Activated CD4-positive, alpha-beta T cell treated with anti-CD3 and anti-CD28 coated beads, Interleukin-2, amount 10 ng/mL, durations not matched to agents 24 days and 14 days (primary cell): ENCODE measurements at regions of chr6 and their contacts with region 1.

Region 1: DNA sequence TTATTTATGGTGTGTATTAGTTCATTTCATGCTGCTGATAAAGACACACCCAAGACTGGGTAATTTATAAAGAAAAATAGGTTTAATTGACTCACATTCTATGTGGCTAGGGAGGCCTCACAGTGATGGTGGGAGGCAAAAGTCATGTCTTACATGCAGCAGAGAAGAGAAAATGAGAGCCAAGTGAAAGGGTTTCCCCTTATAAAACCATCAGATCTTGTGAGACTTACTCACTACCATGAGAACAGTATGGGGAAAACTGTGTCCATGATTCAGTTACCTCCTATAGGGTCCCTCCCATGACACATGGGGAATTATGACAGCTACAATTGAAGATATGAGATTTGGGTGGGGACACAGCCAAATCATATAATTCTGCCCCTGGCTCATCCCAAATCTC is 150.0 kb upstream of the AHI1 start:
- DNase-seq: no peak
- H3K4me3 Mint-ChIP-seq: peak overlapping the region; percentile 86
- H3K27ac Mint-ChIP-seq: peak overlapping the region; percentile 98
- H3K4me1 Mint-ChIP-seq: peaks cover 52% of the 10 kb centered on the region
- H3K27me3 Mint-ChIP-seq: no peaks in the 10 kb centered on the region

Region 2: GRCh38 chr6:135403584-135403983 is 243.9 kb before region 1 on chr6:
- intact Hi-C with region 1: no loop called
- DNase-seq: no peak
- H3K4me3 Mint-ChIP-seq: no peak overlapping the region
- H3K27ac Mint-ChIP-seq: no peak overlapping the region
- H3K4me1 Mint-ChIP-seq: no peaks in the 10 kb centered on the region
- H3K27me3 Mint-ChIP-seq: no peaks in the 10 kb centered on the region

Region 3: GRCh38 chr6:135568366-135568765 is 79.2 kb before region 1 on chr6:
- intact Hi-C with region 1: loop called (anchors 1 kb)
- DNase-seq: peak; percentile 90
- H3K4me3 Mint-ChIP-seq: peak overlapping the region; percentile 64
- H3K27ac Mint-ChIP-seq: peak overlapping the region; percentile 92
- H3K4me1 Mint-ChIP-seq: peaks cover 62% of the 10 kb centered on the region
- H3K27me3 Mint-ChIP-seq: no peaks in the 10 kb centered on the region

Region 4: DNA sequence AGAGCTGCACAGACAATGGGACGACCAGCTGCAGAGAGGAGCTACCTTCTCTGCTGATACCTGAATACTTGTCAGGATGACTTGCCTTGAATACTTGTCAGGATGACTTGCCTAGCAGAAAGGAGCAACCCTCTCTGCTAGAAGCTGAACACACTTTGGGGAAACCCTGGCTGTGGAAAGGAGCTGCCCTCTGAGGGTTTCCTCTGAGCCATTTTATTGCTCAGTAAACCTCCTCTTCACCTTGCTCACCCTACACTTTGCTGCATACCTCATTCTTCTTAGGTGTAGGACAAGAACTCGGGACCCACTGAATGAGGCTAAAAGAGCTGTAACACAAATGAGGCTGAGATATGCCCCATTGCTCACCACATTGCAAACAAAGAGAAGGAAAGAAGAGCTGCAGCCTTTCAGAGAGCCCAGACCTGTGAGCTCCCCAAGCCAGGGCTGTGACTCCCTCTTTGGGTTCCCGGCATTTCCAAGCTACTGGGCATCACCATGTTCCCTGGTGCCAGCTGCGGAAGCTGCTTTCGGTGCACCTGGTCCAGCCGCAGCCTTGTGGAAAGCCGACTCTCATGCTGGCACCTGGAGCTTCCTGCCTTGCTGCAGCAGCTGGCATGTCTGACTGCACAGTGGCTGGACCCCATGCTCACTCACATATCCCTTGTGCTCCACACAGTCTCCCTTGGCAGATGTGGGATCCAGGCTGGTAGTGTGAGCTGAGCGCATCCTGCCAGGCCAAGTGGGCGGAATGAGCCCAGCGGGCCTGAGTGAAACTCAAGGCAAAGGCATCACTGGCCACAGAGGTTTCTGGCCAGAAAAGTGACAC is 43.3 kb before region 1 on chr6:
- intact Hi-C with region 1: loop called (anchors 2 kb)
- DNase-seq: peak; percentile 56
- H3K4me3 Mint-ChIP-seq: no peak overlapping the region
- H3K27ac Mint-ChIP-seq: peak overlapping the region; percentile 90
- H3K4me1 Mint-ChIP-seq: peaks cover 31% of the 10 kb centered on the region
- H3K27me3 Mint-ChIP-seq: no peaks in the 10 kb centered on the region

Region 5: DNA sequence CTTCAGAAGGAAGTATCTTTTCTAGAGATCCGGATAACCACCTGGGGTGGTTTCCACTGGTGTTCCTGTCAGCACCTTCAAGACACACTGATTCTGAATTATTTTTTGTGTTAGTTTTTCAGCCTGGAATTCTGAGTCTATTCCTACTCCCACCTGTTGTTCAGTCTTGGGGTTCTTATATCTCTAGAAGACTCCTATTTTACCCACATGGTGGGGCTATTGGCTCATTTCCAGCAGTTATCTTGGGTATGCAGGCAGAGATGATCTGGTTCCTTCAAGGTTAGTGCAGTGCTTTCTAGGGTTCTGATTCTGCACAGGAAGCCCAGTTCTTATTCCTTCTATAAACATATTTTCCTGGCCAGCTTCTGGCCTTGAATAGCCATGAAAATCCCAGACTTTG is 28.3 kb after region 1 on chr6:
- intact Hi-C with region 1: loop called (anchors 2 kb)
- DNase-seq: peak; percentile 85
- H3K4me3 Mint-ChIP-seq: peak overlapping the region; percentile 32
- H3K27ac Mint-ChIP-seq: peak overlapping the region; percentile 74
- H3K4me1 Mint-ChIP-seq: peaks cover 39% of the 10 kb centered on the region
- H3K27me3 Mint-ChIP-seq: no peaks in the 10 kb centered on the region